Activated naive CD8-positive, alpha-beta T cell treated with anti-CD3 and anti-CD28 coated beads, Interleukin-2, amount 10 ng/mL, durations not matched to agents 7 days and 5 days (primary cell): ENCODE measurements at regions of chr5 and their contacts with region 1.

Region 1: DNA sequence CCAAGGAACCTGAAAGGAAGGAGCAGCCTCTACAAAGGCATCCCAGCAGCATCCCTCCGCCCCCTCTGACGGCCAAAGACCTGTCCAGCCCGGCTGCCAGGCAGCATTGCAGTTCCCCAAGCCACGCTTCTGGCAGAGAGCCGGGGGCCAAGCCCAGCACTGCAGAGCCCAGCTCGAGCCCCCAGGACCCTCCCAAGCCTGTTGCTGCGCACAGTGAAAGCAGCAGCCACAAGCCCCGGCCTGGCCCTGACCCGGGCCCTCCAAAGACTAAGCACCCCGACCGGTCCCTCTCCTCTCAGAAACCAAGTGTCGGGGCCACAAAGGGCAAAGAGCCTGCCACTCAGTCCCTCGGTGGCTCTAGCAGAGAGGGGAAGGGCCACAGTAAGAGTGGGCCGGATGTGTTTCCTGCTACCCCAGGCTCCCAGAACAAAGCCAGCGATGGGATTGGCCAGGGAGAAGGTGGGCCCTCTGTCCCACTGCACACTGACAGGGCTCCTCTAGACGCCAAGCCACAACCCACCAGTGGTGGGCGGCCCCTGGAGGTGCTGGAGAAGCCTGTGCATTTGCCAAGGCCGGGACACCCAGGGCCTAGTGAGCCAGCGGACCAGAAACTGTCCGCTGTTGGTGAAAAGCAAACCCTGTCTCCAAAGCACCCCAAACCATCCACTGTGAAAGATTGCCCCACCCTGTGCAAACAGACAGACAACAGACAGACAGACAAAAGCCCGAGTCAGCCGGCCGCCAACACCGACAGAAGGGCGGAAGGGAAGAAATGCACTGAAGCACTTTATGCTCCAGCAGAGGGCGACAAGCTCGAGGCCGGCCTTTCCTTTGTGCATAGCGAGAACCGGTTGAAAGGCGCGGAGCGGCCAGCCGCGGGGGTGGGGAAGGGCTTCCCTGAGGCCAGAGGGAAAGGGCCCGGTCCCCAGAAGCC is 30.8 kb downstream of the CD180 start:
- DNase-seq: peak; percentile 88
- ATAC-seq: peak; percentile 89
- H3K4me3 Mint-ChIP-seq: peak overlapping the region; percentile 87
- H3K27ac Mint-ChIP-seq: peak overlapping the region; percentile 96
- H3K4me1 Mint-ChIP-seq: peaks cover 39% of the 10 kb centered on the region
- H3K27me3 Mint-ChIP-seq: no peaks in the 10 kb centered on the region

Region 2: GRCh38 chr5:67182301-67182790 is 16.6 kb after region 1 on chr5:
- POLR2A ChIA-PET with region 1: interaction called, 80 read pairs
- DNase-seq: peak; percentile 41
- ATAC-seq: peak; percentile 37
- H3K4me3 Mint-ChIP-seq: peak overlapping the region; percentile 52
- H3K27ac Mint-ChIP-seq: peak overlapping the region; percentile 80
- H3K4me1 Mint-ChIP-seq: peaks cover 57% of the 10 kb centered on the region
- H3K27me3 Mint-ChIP-seq: no peaks in the 10 kb centered on the region

Region 3: DNA sequence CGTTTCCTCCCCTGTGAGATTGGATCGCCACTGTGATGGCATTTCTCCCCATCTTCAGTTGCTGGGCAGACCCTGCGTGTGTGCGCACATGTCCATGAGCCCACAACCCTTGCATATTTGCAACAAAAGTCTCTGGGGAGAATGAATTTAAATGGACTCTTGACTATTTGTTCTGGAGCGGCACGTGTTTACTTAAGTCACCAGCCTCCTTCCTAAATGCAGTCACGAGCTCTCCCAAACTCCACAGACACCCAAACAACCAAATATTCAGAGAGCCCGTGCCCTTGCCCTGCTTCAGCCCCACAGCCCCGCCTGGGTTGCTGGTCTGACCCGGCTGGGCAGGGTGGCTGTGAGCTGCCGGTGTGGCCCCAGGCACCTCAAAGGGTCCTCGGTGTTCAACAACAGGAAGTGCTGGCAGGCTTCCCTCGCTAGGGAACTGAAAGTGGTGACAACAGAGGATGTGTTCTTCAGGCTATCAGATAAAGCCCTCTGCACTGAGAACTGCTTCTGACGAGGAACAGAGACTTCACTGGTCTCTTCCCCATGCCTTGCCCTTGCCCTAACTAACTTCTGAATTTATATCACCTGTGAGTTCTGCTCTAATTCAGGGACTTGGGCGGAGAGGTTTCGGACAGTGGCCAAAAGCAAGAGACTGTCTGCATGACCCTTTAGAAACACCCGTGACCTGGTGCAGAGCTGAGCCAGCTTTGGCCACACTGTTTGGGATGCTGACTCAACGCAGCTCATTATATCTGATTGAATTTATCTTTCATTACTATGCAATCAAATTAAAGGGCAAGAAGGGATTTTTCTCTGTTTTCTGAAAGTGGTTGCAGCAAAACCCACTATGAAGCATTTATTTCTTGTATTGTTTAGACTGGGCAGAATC is 50.0 kb after region 1 on chr5:
- POLR2A ChIA-PET with region 1: interaction called, 341 read pairs
- DNase-seq: peak; percentile 75
- ATAC-seq: peak; percentile 99
- H3K4me3 Mint-ChIP-seq: peak overlapping the region; percentile 84
- H3K27ac Mint-ChIP-seq: peak overlapping the region; percentile 100
- H3K4me1 Mint-ChIP-seq: peaks cover 54% of the 10 kb centered on the region
- H3K27me3 Mint-ChIP-seq: no peaks in the 10 kb centered on the region

Region 4: DNA sequence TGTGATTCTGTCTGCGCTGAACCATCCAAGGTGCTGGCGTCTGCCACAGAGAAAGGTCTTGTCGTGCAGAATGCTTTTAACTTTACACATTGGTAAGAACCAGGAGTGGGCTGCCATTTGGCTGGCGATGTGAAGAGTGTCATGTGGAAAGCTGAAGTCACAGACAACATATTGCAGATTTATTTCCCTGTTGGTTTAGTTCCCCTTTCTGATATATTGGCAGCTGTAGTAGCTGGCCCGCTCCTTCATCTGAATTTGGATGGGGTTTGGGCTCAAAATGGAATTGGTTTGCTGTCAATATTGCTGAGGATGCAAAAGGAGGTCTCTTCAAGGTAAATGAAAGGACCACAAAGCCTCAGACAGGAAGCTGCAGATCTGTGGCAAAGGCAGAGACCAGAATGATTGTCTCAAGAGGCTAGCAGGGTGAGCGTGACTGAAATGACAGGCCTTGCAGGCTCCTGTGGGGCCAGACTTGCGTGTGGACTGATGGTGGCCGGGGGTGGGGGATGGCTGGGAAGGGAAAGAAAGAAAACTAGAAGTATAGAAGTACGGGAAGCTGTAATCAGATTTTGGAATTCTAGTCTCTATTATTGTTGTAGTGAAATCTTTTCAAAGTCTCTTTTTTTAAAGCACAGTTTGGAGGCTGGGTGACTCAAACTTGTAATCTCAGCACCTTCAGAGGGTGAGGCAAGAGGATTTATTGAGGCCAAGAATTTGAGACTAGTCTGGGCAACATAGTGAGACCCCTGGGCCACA is 55.9 kb after region 1 on chr5:
- POLR2A ChIA-PET with region 1: interaction called, 20 read pairs
- DNase-seq: peak; percentile 58
- ATAC-seq: peak; percentile 86
- H3K4me3 Mint-ChIP-seq: peak overlapping the region; percentile 76
- H3K27ac Mint-ChIP-seq: peak overlapping the region; percentile 93
- H3K4me1 Mint-ChIP-seq: peaks cover 60% of the 10 kb centered on the region
- H3K27me3 Mint-ChIP-seq: no peaks in the 10 kb centered on the region